Activated B cell treated with CpG ODN at 0.5 μM for 24 hours (primary cell): ENCODE measurements at regions of chr4 and their contacts with region 1.

Region 1: GRCh38 chr4:40199999-40200874 is 3.4 kb downstream of the RHOH start:
- DNase-seq: no peak
- ATAC-seq: peak; percentile 20
- H3K4me3 Mint-ChIP-seq: peak overlapping the region; percentile 97
- H3K27ac Mint-ChIP-seq: peak overlapping the region; percentile 95
- H3K4me1 Mint-ChIP-seq: peaks cover 67% of the 10 kb centered on the region
- H3K27me3 Mint-ChIP-seq: no peaks in the 10 kb centered on the region
- CTCF ChIP-seq: no peak

Region 2: GRCh38 chr4:38804654-38805295 is 1395.5 kb before region 1 on chr4 and contains the start of gene TLR1:
- CTCF ChIA-PET with region 1: no interaction called
- POLR2A ChIA-PET with region 1: no interaction called
- intact Hi-C with region 1: loop called (anchors 10 kb)
- DNase-seq: no peak
- ATAC-seq: peak; percentile 45
- H3K4me3 Mint-ChIP-seq: peak within 1 kb of the TSS; percentile 86
- H3K27ac Mint-ChIP-seq: peak within 1 kb of the TSS; percentile 93
- H3K4me1 Mint-ChIP-seq: peaks cover 68% of the 10 kb centered on the region
- H3K27me3 Mint-ChIP-seq: no peaks in the 10 kb centered on the region
- CTCF ChIP-seq: peak; percentile 54
- total RNA-seq, gene TLR1: 39.6 and 43.0 TPM in 2 replicates

Region 3: DNA sequence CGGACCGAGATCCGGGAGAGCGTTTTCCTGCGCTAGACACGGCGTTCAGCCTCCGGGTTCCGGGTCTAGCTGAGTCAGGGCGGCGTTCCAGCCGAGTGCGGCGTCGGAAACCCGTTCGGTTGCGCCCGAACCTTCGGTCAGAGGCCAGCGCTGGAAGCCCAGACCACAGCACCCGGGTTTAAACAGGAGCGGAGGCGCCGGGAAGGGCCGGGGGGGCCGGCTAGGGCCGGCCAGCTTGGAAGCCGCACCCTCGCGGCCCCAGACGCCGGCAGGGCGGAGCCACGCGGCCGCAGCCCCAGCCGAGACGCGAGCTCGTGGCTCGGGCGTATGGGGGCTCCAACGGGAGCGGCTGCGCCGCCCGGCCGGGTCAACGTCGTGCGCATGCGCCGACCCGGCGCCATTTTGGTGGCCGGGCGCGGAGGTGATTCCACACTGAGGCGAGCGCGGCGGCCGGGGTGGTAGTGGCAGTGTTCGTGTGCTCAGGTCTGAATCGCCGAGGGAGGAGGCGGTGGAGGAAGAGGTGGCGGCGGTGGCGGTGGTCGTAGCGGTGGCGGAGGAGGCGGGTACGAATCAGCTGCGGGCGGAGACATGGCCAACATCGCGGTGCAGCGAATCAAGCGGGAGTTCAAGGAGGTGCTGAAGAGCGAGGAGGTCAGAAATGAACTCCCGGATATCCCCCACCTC is 502.4 kb before region 1 on chr4 and contains the start of gene UBE2K:
- CTCF ChIA-PET with region 1: no interaction called
- POLR2A ChIA-PET with region 1: no interaction called
- intact Hi-C with region 1: loop called (anchors 5 kb)
- DNase-seq: peak; percentile 93
- ATAC-seq: peak; percentile 89
- H3K4me3 Mint-ChIP-seq: peak within 1 kb of the TSS; percentile 99
- H3K27ac Mint-ChIP-seq: peak within 1 kb of the TSS; percentile 96
- H3K4me1 Mint-ChIP-seq: peaks cover 48% of the 10 kb centered on the region
- H3K27me3 Mint-ChIP-seq: no peaks in the 10 kb centered on the region
- CTCF ChIP-seq: no peak
- total RNA-seq, gene UBE2K: 54.4 and 64.0 TPM in 2 replicates

Region 4: GRCh38 chr4:40173470-40173875 is 26.8 kb before region 1 on chr4:
- CTCF ChIA-PET with region 1: no interaction called
- POLR2A ChIA-PET with region 1: interaction called, 11 read pairs
- intact Hi-C with region 1: loop called (anchors 1 kb)
- DNase-seq: no peak
- ATAC-seq: peak; percentile 83
- H3K4me3 Mint-ChIP-seq: peak overlapping the region; percentile 69
- H3K27ac Mint-ChIP-seq: peak overlapping the region; percentile 81
- H3K4me1 Mint-ChIP-seq: peaks cover 59% of the 10 kb centered on the region
- H3K27me3 Mint-ChIP-seq: no peaks in the 10 kb centered on the region
- CTCF ChIP-seq: no peak

Region 5: DNA sequence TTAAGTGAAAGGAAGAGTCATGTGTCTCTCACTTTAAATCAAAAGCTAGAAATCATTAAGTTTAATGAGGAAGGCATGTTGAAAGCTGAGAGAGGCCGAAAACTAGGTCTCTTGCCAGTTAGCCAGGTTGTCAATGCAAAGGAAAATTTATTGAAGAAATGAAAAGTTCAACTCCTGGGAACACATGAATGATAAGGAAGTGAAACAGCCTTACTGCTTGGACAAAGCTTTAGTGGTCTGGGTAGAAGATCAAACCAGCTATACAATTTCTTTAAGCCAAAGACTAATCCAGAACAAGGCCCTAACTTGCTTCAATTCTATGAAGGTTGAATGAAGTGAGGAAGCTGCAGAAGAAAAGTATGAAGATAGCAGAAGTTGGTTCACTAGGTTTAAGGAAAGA is 21.5 kb after region 1 on chr4:
- CTCF ChIA-PET with region 1: interaction called, 3 read pairs
- POLR2A ChIA-PET with region 1: interaction called, 18 read pairs
- intact Hi-C with region 1: loop called (anchors 2 kb)
- DNase-seq: no peak
- ATAC-seq: no peak
- H3K4me3 Mint-ChIP-seq: peak overlapping the region; percentile 26
- H3K27ac Mint-ChIP-seq: peak overlapping the region; percentile 70
- H3K4me1 Mint-ChIP-seq: peaks cover 94% of the 10 kb centered on the region
- H3K27me3 Mint-ChIP-seq: no peaks in the 10 kb centered on the region
- CTCF ChIP-seq: no peak

Region 6: GRCh38 chr4:40301603-40302002 is 101.4 kb after region 1 on chr4:
- CTCF ChIA-PET with region 1: interaction called, 9 read pairs
- POLR2A ChIA-PET with region 1: interaction called, 187 read pairs
- intact Hi-C with region 1: no loop called
- DNase-seq: peak; percentile 51
- ATAC-seq: peak; percentile 53
- H3K4me3 Mint-ChIP-seq: peak overlapping the region; percentile 79
- H3K27ac Mint-ChIP-seq: peak overlapping the region; percentile 95
- H3K4me1 Mint-ChIP-seq: peaks cover 88% of the 10 kb centered on the region
- H3K27me3 Mint-ChIP-seq: no peaks in the 10 kb centered on the region
- CTCF ChIP-seq: no peak

Region 7: GRCh38 chr4:40434126-40434692 is 234.0 kb after region 1 on chr4:
- CTCF ChIA-PET with region 1: no interaction called
- POLR2A ChIA-PET with region 1: no interaction called
- intact Hi-C with region 1: no loop called
- DNase-seq: no peak
- ATAC-seq: no peak
- H3K4me3 Mint-ChIP-seq: no peak overlapping the region
- H3K27ac Mint-ChIP-seq: no peak overlapping the region
- H3K4me1 Mint-ChIP-seq: no peaks in the 10 kb centered on the region
- H3K27me3 Mint-ChIP-seq: no peaks in the 10 kb centered on the region
- CTCF ChIP-seq: no peak